ENCODE measurements at regions of chr3 and their contacts with region 1.

Region 1: DNA sequence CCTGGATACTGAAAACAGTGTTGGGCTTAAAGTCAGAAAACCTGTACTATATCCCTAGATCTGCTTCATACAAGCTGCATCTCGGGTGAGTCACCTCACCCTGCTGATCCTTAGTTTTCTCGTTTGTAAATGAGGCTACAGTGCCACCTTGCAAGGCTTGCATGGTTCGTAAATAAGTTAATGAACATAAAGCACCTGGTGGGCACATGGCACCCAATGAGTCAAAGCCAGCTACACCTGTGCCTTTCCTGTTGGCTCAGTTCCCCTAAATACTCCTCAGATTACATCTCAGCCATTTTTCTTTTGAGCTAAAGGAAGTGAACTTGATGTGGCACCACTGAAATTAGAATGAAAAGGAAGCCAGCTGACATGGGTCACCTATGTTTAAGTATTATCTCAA is 26.5 kb downstream of the RTP1 start:
- DNase-seq: no peak
- H3K4me3 Mint-ChIP-seq: no peak overlapping the region
- H3K27ac Mint-ChIP-seq: no peak overlapping the region
- H3K4me1 Mint-ChIP-seq: no peaks in the 10 kb centered on the region
- H3K27me3 Mint-ChIP-seq: peaks cover 3% of the 10 kb centered on the region

Region 2: GRCh38 chr3:187210545-187211327 is 13.1 kb before region 1 on chr3:
- CTCF ChIA-PET with region 1: interaction called, 14 read pairs
- POLR2A ChIA-PET with region 1: no interaction called
- intact Hi-C with region 1: no loop called
- DNase-seq: no peak
- H3K4me3 Mint-ChIP-seq: no peak overlapping the region
- H3K27ac Mint-ChIP-seq: no peak overlapping the region
- H3K4me1 Mint-ChIP-seq: no peaks in the 10 kb centered on the region
- H3K27me3 Mint-ChIP-seq: no peaks in the 10 kb centered on the region

Region 3: DNA sequence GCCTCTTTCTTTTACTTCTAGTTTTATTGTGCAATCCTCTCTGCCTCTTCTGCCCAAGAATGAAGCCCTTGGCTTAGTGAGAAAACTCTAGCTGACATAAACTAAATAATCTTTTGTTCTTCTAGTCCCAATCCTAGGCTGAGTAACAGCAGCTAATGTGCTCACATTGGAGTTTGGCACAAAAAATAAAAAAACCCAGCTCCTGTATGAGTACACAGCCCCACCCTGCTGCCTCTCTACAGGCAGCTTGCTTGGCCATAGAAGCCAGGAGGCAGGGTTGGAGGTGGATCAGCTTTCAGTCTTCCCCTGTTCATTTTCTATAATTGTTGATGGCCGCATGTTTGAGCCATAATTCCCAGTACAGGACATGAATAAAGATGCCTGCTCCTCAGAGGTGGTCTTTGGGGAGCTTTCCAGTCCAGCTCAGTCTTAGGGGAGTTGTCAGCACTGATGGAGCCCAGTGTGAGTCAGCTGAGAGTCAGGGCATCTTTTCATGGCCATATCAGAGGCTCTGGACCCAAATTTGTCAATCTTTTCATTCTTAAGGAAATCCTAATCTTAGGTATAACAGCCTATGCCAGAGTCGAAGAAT is 20.2 kb after region 1 on chr3:
- CTCF ChIA-PET with region 1: no interaction called
- POLR2A ChIA-PET with region 1: no interaction called
- intact Hi-C with region 1: no loop called
- DNase-seq: no peak
- H3K4me3 Mint-ChIP-seq: no peak overlapping the region
- H3K27ac Mint-ChIP-seq: no peak overlapping the region
- H3K4me1 Mint-ChIP-seq: peaks cover 7% of the 10 kb centered on the region
- H3K27me3 Mint-ChIP-seq: no peaks in the 10 kb centered on the region

Region 4: GRCh38 chr3:187403768-187404270 is 180.0 kb after region 1 on chr3:
- CTCF ChIA-PET with region 1: no interaction called
- POLR2A ChIA-PET with region 1: no interaction called
- intact Hi-C with region 1: no loop called
- DNase-seq: no peak
- H3K4me3 Mint-ChIP-seq: no peak overlapping the region
- H3K27ac Mint-ChIP-seq: no peak overlapping the region
- H3K4me1 Mint-ChIP-seq: no peaks in the 10 kb centered on the region
- H3K27me3 Mint-ChIP-seq: peaks cover 9% of the 10 kb centered on the region

Region 5: GRCh38 chr3:187714404-187714979 is 490.7 kb after region 1 on chr3:
- CTCF ChIA-PET with region 1: interaction called, 7 read pairs
- POLR2A ChIA-PET with region 1: no interaction called
- intact Hi-C with region 1: loop called (anchors 1 kb)
- DNase-seq: peak; percentile 82
- H3K4me3 Mint-ChIP-seq: no peak overlapping the region
- H3K27ac Mint-ChIP-seq: no peak overlapping the region
- H3K4me1 Mint-ChIP-seq: peaks cover 12% of the 10 kb centered on the region
- H3K27me3 Mint-ChIP-seq: no peaks in the 10 kb centered on the region

Measured in activated CD4-positive, alpha-beta memory T cell treated with anti-CD3 and anti-CD28 coated beads for 36 hours (primary cell).